Posterior cingulate gyrus (tissue), 11 donors: ENCODE measurements at regions of chr14 and their contacts with region 1.

Region 1: GRCh38 chr14:102437997-102438915 is 71.3 kb downstream of the ANKRD9 start:
- DNase-seq: peak; percentile 82 to 98 (median 91)

Region 2: DNA sequence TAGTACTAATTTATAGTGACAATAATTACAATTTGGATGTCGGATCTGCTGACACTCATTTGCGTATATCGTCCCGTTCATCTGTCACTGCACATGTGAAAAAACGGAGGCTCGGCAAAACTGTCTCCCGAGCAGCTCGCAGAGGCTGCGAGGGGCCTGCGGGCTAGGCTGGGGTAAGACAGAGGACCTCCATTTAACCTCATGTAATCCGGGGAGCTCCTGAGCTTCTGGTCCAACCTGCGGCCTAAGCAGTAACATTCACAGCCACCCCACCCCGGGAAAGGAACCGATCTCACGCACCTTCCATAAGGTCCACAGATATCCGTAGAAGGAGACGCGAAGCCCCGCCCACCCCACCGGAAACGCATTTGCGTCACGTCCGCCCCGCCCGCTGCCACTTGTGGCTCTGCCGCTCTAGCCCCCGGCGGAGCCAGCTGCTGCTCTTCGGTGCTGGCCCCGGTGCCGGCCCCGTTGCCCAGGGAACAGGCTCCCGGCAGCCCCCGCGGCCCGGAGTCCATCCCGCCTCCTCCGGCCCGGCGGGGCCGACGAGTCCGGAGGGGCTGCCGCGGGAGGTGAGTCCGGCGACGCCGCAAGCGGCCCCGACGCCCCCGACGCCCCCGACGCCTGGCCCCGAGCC is 75.6 kb before region 1 on chr14 and contains the starts of genes CINP and TECPR2:
- intact Hi-C with region 1: loop called (anchors 5 kb)
- DNase-seq: peak; percentile 98 to 100 (median 100)

Region 3: GRCh38 chr14:102516531-102517415 is 78.5 kb after region 1 on chr14:
- intact Hi-C with region 1: loop called (anchors 1 kb)
- DNase-seq: peak in 7 of 10 donors; percentile 40 to 95 (median 66)

Region 4: DNA sequence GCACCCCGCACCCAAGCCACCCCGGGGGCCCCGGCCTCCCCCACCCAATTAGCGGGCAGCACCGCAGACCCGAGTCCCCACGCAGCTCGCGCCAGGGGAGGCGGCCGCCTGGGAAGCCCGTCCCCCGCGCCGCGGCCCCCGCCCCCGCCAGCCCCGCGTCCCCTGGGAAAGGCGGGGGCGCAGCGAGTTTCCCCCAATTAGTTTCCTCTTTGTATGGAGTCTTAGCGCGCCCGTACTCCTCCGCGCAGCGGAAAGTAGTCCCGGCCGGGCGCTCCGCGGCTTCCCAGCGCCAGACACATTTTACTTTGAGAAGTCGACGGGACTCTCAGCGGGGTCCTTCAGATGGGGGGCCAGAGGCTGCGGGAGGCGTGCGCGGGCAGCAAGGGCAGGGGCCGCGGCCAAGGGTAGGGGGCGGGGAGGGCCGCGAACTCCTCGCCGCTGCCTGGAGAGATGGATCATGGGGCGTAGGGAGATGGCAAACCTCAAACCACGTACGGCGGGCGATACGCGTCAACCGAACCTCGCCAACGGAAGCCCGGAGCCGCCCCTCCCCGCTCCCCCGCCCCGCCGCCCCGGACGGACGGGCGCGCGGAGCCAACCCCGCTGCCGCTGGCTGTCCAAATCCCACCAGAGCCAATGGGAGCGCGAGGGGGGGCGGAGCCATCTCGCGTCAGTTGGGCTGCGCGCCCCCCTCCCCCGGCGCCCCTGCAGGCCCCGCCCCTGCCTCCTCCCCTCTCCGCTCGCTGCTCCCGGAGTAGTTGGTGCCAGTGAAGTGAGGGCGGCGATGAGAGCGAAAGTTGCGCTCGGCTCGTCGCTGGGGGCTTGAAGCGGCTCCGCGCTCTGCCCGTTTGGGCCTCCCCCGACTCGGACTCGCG is 153.9 kb after region 1 on chr14 and contains the start of gene RCOR1:
- intact Hi-C with region 1: loop called (anchors 10 kb)
- DNase-seq: peak; percentile 96 to 100 (median 98)